ENCODE measurements at regions of chr11 and their contacts with region 1.

Region 1: GRCh38 chr11:27485930-27486773 is 13.6 kb upstream of the LGR4 start:
- DNase-seq: peak; percentile 64
- H3K4me3 Mint-ChIP-seq: no peak overlapping the region
- H3K27ac Mint-ChIP-seq: no peak overlapping the region
- H3K4me1 Mint-ChIP-seq: no peaks in the 10 kb centered on the region
- H3K27me3 Mint-ChIP-seq: no peaks in the 10 kb centered on the region

Region 2: GRCh38 chr11:27475622-27476021 is 10.5 kb before region 1 on chr11:
- CTCF ChIA-PET with region 1: interaction called, 12 read pairs
- POLR2A ChIA-PET with region 1: no interaction called
- DNase-seq: no peak
- H3K4me3 Mint-ChIP-seq: no peak overlapping the region
- H3K27ac Mint-ChIP-seq: no peak overlapping the region
- H3K4me1 Mint-ChIP-seq: peaks cover 17% of the 10 kb centered on the region
- H3K27me3 Mint-ChIP-seq: peaks cover 25% of the 10 kb centered on the region

Measured in activated CD4-positive, alpha-beta T cell treated with anti-CD3 and anti-CD28 coated beads, Interleukin-2, amount 10 ng/mL, durations not matched to agents 7 days and 5 days (primary cell).